ENCODE measurements at regions of chr21 and their contacts with region 1.

Region 1: DNA sequence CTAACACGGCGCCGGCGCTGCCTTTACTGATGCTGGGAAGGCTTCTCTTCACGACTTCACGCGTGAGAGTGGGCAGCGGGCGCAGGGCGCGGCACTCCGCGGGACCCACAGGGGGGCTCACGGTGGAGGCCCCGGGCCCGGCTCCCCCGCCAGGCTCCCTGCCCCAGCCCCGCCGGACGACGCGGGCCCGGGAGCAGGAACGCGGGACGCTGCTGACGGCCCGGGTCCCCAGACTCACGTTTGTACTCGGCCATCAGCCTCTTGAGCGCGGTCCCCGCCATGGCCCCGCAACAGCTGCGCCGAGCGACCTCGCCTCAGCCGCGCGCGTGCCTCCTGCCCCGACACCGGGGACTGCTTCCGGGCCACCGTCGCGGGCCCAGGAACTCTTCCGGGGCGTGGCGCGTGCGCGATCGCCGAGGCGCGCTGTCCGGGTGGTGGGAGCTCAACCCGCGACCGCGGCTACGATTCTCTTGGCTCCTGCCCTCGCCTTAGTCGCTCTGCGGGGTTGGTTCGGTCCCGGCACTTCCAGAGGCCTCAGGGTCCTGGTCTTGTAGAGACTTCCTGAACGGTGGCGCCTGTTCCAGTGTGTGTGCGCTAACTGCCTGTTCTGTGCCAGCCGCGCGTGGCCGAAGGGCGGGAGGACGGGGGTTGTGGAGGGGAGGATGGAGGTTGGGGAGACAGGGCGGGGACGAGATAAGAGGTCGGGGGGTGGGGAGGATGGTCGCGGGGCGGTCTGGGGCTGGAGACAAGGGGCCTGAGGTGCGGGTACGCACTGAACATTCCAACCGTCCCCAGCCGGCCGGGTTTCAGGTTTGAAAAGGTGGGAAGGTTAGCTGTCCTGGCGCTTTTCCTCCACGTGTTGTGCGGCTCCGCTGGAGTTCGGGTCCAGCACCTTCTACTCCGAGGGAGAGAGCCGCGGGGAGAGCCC is at the start of gene UBE2G2:
- DNase-seq: peak; percentile 47 to 77
- H3K4me3 ChIP-seq: peak within 1 kb of the TSS; percentile 88
- H3K27ac ChIP-seq: no peak within 1 kb of the TSS
- H3K4me1 ChIP-seq: peaks cover 11% of the 10 kb centered on the region
- H3K27me3 ChIP-seq: no peaks in the 10 kb centered on the region
- CTCF ChIP-seq: no peak; the same call in 1 of the 2 replicates
- total RNA-seq, gene UBE2G2: 51.9 and 52.7 TPM in 2 replicates

Region 2: GRCh38 chr21:46066591-46067331 is 1265.0 kb after region 1 on chr21:
- CTCF ChIA-PET with region 1: no interaction called
- POLR2A ChIA-PET with region 1: interaction called, 12 read pairs
- intact Hi-C with region 1: no loop called
- DNase-seq: no peak
- H3K4me3 ChIP-seq: no peak overlapping the region
- H3K27ac ChIP-seq: no peak overlapping the region
- H3K4me1 ChIP-seq: peaks cover 18% of the 10 kb centered on the region
- H3K27me3 ChIP-seq: no peaks in the 10 kb centered on the region
- CTCF ChIP-seq: no peak